IMR-90 (cell line): ENCODE measurements at regions of chr1 and their contacts with region 1.

Region 1: DNA sequence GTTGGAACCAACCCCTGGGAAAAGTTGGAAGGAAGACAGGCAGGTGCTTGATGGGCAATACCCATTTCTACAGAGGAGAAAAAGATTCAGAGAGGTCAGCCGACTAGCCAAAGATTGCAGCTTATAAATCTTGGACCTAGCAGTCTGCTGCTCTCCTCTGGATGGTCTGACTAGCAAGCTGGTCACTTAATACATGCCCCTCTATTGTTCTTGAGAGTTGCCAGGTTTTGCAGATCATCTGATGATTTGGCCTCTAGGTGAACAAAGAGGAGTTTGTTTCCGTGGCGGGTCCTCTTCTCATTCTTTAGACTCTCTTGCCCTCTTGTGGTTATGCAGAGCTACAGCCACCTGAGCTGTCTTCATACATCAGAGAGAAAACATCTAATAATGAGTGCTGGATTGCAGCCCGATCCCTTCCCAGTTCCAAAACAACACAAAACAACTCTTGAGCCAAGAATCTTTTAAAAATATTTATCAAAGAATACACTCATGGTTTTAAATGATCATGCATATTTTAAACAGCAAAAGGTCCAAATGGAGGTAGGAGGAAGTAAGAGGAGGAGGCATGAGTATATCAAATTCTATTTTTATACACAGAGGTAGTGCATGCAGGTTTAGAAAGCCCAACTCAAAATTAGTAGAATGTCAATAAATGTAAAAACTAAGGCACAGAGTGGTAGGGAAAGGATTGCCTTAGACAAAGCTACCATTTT is 115.7 kb downstream of the SLC30A10 start:
- DNase-seq: peak; percentile 71
- ATAC-seq: peak; percentile 95
- H3K4me3 ChIP-seq: no peak overlapping the region
- H3K27ac ChIP-seq: no peak overlapping the region
- H3K4me1 ChIP-seq: peaks cover 2% of the 10 kb centered on the region; the same call in 1 of the 2 replicates
- H3K27me3 ChIP-seq: peaks cover 7% of the 10 kb centered on the region
- CTCF ChIP-seq: peak; percentile 81
- POLR2A ChIP-seq: 0 out of 2 replicates have a peak, but pooled peaks have one; percentile 25
- RAD21 ChIP-seq: peak; percentile 84

Region 2: GRCh38 chr1:218323568-218324225 is 1489.0 kb before region 1 on chr1:
- CTCF ChIA-PET with region 1: interaction called, 4 read pairs
- POLR2A ChIA-PET with region 1: no interaction called
- dilution Hi-C with region 1: no loop called
- in situ Hi-C with region 1: loop called (anchors 10 kb)
- intact Hi-C with region 1: no loop called
- DNase-seq: no peak
- ATAC-seq: no peak
- H3K4me3 ChIP-seq: no peak overlapping the region
- H3K27ac ChIP-seq: no peak overlapping the region
- H3K4me1 ChIP-seq: peaks cover 2% of the 10 kb centered on the region; the same call in 1 of the 2 replicates
- H3K27me3 ChIP-seq: no peaks in the 10 kb centered on the region
- CTCF ChIP-seq: no peak
- POLR2A ChIP-seq: no peak
- RAD21 ChIP-seq: no peak

Region 3: GRCh38 chr1:219209578-219209977 is 603.1 kb before region 1 on chr1:
- CTCF ChIA-PET with region 1: no interaction called
- POLR2A ChIA-PET with region 1: no interaction called
- dilution Hi-C with region 1: no loop called
- in situ Hi-C with region 1: no loop called
- intact Hi-C with region 1: loop called (anchors 5 kb)
- DNase-seq: no peak
- ATAC-seq: peak; percentile 51; the same call in 1 of the 2 replicates
- H3K4me3 ChIP-seq: no peak overlapping the region
- H3K27ac ChIP-seq: peak overlapping the region; percentile 55; the same call in 1 of the 2 replicates
- H3K4me1 ChIP-seq: peaks cover 2% of the 10 kb centered on the region
- H3K27me3 ChIP-seq: no peaks in the 10 kb centered on the region
- CTCF ChIP-seq: no peak
- POLR2A ChIP-seq: no peak
- RAD21 ChIP-seq: no peak

Region 4: DNA sequence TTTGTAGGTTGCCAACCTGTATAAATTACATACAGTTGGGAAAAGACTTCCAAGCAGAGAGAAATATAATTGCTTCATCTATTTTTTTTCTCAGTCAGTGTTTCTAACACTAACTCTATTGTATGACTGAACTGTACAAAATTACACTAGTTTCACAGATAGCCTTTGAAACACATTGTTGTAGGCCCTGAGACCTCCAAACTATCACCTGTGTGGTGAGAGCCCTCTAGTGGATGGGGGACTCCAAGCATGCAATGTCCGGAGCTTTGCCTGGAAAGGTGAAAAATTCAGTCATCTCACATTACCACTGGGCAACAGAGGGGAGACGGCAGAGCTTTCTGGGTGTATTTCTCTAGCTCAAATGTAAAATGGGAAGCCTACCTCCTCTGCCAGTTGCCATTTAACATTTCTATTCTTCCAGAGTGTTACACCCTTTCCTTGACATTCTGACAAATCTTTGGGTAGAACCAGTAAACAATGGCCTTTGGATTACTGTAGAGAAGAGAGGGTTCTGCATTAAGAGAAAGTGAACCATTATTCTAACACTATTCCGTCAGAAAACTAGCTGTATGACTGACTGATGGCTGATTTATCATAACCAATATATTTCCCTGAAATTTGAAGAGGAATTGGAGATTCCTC is 426.7 kb before region 1 on chr1:
- CTCF ChIA-PET with region 1: interaction called, 3 read pairs
- POLR2A ChIA-PET with region 1: no interaction called
- dilution Hi-C with region 1: no loop called
- in situ Hi-C with region 1: no loop called
- intact Hi-C with region 1: loop called (anchors 1 kb)
- DNase-seq: peak; percentile 71
- ATAC-seq: peak; percentile 87
- H3K4me3 ChIP-seq: no peak overlapping the region
- H3K27ac ChIP-seq: no peak overlapping the region
- H3K4me1 ChIP-seq: peaks cover 2% of the 10 kb centered on the region; the same call in 1 of the 2 replicates
- H3K27me3 ChIP-seq: no peaks in the 10 kb centered on the region
- CTCF ChIP-seq: peak; percentile 83
- POLR2A ChIP-seq: no peak
- RAD21 ChIP-seq: peak; percentile 92

Region 5: DNA sequence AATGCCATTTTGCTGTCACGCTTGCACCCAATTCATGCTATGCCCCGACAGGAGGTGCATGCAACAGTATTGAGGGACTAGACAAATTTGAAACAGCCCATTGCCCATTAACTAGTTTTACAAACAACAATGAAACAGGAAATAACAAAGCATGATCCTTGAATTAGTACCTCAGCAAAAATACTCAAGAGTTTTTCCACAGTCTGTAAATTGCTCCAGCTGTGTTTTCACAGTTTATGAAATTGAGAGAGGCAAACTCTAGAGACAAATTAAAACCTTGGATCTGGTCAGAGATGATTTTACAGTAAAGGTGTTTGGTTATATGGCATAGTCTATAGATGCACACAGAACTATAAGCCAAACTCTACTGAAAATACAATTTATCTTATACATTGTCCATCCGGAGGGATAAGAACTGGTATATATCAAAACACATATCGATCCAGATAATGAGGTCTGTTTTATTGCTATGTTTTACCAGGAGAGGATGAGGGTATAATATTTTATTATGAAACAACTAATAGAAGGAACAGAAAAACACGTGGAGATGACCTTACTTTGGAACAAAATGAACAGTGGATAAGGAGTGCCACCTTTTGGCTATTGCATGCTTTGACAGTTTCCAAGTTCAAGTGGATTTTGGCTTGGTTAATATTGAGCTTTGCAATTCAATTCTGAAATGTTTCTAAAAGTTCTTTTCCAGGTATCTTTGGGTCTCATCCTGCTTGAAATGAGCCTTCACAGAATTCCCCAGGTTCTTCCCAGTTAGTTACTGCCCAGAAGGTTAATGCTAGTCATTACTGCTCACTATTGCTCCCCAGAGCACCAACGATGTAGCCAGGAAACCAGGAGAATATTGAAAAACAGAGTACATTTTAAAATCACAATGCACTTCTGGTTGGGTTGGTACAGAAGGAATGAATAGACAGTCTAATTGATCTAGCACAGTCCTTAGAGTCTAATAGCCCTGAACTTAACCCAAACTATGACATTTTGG is 245.4 kb before region 1 on chr1:
- CTCF ChIA-PET with region 1: no interaction called
- POLR2A ChIA-PET with region 1: no interaction called
- dilution Hi-C with region 1: no loop called
- in situ Hi-C with region 1: loop called (anchors 10 kb)
- intact Hi-C with region 1: loop called (anchors 2 kb)
- DNase-seq: peak; percentile 71
- ATAC-seq: peak; percentile 75
- H3K4me3 ChIP-seq: no peak overlapping the region
- H3K27ac ChIP-seq: no peak overlapping the region
- H3K4me1 ChIP-seq: no peaks in the 10 kb centered on the region
- H3K27me3 ChIP-seq: no peaks in the 10 kb centered on the region
- CTCF ChIP-seq: peak; percentile 70
- POLR2A ChIP-seq: no peak
- RAD21 ChIP-seq: peak; percentile 79

Region 6: DNA sequence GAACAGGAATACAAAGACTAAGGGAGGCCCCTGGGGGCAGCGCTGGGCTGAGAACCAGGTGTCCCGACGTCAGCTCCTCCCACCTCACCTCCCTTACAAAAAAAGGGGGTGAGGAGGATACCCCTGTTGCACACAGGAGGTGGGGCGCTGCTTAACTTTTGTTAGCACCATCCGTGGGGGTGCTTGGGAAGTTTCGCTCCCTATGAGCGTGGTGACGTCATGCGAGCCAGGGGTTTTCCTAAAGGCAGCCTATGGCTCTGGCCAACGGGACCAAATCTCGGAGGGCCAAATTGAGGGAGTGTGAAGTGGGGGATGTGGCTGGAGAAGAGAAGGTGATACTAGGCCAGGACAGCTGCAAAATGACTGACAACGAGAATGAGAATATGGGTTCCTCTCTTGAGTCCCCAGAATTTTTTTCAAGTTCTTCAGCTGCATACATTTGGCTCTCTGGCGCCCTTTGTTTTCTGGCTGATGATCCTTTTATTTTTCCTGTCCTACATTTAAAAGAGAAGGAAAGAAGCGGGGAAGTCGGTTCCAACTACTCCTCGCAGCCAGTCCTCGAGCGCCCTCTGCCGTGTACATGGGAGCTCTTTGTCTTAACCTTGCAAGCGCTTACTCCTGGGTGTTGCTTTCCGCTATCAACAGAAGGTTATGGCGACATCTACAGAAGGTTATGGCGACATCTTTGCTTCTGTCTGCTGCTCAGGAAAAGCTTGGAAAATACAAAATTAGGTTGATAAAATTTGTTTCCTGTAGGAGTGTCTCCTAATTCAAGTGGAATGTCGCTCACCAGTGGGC is 151.8 kb before region 1 on chr1:
- CTCF ChIA-PET with region 1: no interaction called
- POLR2A ChIA-PET with region 1: no interaction called
- dilution Hi-C with region 1: no loop called
- in situ Hi-C with region 1: no loop called
- intact Hi-C with region 1: loop called (anchors 2 kb)
- DNase-seq: peak; percentile 88
- ATAC-seq: peak; percentile 92
- H3K4me3 ChIP-seq: no peak overlapping the region
- H3K27ac ChIP-seq: peak overlapping the region; percentile 60; the same call in 1 of the 2 replicates
- H3K4me1 ChIP-seq: peaks cover 6% of the 10 kb centered on the region; the same call in 1 of the 2 replicates
- H3K27me3 ChIP-seq: no peaks in the 10 kb centered on the region
- CTCF ChIP-seq: peak; percentile 89
- POLR2A ChIP-seq: 0 out of 2 replicates have a peak, but pooled peaks have one; percentile 27
- RAD21 ChIP-seq: peak; percentile 81

Region 7: GRCh38 chr1:219885680-219886079 is 73.0 kb after region 1 on chr1:
- CTCF ChIA-PET with region 1: no interaction called
- POLR2A ChIA-PET with region 1: no interaction called
- dilution Hi-C with region 1: no loop called
- in situ Hi-C with region 1: no loop called
- intact Hi-C with region 1: no loop called
- DNase-seq: no peak
- ATAC-seq: no peak
- H3K4me3 ChIP-seq: no peak overlapping the region
- H3K27ac ChIP-seq: no peak overlapping the region
- H3K4me1 ChIP-seq: no peaks in the 10 kb centered on the region
- H3K27me3 ChIP-seq: no peaks in the 10 kb centered on the region
- CTCF ChIP-seq: no peak
- POLR2A ChIP-seq: no peak
- RAD21 ChIP-seq: no peak

Region 8: GRCh38 chr1:220300442-220301121 is 487.9 kb after region 1 on chr1:
- CTCF ChIA-PET with region 1: no interaction called
- POLR2A ChIA-PET with region 1: no interaction called
- dilution Hi-C with region 1: no loop called
- in situ Hi-C with region 1: no loop called
- intact Hi-C with region 1: no loop called
- DNase-seq: peak; percentile 91
- ATAC-seq: peak; percentile 91
- H3K4me3 ChIP-seq: no peak overlapping the region
- H3K27ac ChIP-seq: peak overlapping the region; percentile 74; the same call in 1 of the 2 replicates
- H3K4me1 ChIP-seq: 0 out of 2 replicates have a peak, but pooled peaks cover 1% of the 10 kb centered on the region
- H3K27me3 ChIP-seq: peaks cover 4% of the 10 kb centered on the region
- CTCF ChIP-seq: no peak
- POLR2A ChIP-seq: no peak
- RAD21 ChIP-seq: no peak